Sigmoid colon (tissue), 7 donors: ENCODE measurements at regions of chrX and their contacts with region 1.

Region 1: GRCh38 chrX:120718969-120719368 is 89.1 kb upstream of the C1GALT1C1 start:
- DNase-seq: no peak
- H3K4me3 ChIP-seq: no peak overlapping the region
- H3K27ac ChIP-seq: no peak overlapping the region
- H3K4me1 ChIP-seq: no peaks in the 10 kb centered on the region
- H3K27me3 ChIP-seq: no peaks in the 10 kb centered on the region
- CTCF ChIP-seq: no peak
- EP300 ChIP-seq: no peak
- POLR2A ChIP-seq: no peak

Region 2: DNA sequence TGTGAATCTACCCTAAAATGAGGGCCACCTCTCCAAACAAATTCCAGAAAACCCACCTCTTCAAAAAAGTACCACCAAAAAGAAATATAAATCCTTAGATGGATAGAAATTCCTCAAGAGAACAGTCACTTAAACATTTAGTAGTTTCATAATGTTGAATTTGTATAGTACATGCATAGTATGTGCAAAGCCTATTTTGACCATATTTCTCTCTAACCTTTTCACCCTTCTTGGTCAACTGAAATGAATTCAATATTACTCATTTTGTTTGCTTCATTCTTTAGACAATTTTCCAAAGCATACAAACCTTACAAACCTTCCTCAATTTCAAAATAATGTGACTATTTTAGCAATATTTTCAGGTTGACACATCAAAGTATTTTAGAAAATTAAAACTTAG is 607.4 kb before region 1 on chrX:
- intact Hi-C with region 1: loop called (anchors 10 kb)
- DNase-seq: no peak
- H3K4me3 ChIP-seq: no peak overlapping the region
- H3K27ac ChIP-seq: no peak overlapping the region
- H3K4me1 ChIP-seq: no peaks in the 10 kb centered on the region
- H3K27me3 ChIP-seq: no peaks in the 10 kb centered on the region
- CTCF ChIP-seq: no peak
- EP300 ChIP-seq: no peak
- POLR2A ChIP-seq: no peak